ENCODE measurements at regions of chr12 and their contacts with region 1.

Region 1: GRCh38 chr12:53451661-53452158 is at the start of gene PCBP2:
- DNase-seq: peak; percentile 97 to 100 (median 99)
- H3K4me3 ChIP-seq: peak within 1 kb of the TSS; percentile 59 to 94 (median 77)
- H3K27ac ChIP-seq: peak within 1 kb of the TSS; percentile 74 to 99 (median 96)
- H3K27me3 ChIP-seq: no peaks in the 10 kb centered on the region
- CTCF ChIP-seq: peak; percentile 80 to 98 (median 94)
- total RNA-seq, gene PCBP2: 394 to 594 (median 494) TPM

Region 2: DNA sequence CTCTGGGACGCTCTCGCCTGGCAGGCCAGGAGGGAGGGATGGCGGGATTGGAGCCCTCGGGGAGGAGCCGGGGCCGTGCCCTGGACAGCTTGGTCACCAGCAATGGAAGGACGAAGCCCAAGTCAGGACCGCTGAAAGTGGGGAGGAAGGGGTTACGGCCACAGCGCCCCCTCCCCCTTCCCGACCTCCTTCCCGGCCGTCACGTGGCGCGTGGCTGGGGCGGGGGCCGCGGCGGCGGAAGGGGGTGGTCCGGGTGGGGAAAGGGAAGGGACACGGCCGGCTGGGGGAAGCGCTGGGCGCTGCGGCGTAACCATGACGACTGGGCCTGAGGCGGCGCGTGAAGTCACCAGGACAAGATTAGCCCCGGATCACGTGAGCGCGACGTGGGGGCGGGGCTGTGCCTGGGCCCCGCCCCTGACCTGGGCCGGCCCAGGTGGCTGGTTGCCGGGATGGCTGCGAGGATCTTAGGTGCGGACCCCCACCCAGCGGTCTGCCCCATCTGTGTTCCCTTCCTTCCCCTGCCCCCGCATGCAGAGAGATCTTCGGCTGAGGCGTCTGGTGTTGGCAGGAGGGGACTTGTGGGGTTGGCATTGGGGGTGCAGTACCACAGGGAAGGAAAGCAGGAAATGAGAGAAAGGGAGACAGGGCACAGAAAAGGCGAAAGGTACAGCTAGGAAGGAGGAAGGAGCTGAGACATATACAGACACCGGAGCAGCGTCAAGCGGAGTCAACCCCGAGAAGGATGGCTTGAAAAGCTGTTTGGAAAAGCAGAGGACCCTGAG is 41.3 kb after region 1 on chr12:
- intact Hi-C with region 1: loop called in 1 of 2 experiments (anchors 2 kb)
- DNase-seq: peak; percentile 93 to 98 (median 96)
- H3K4me3 ChIP-seq: peak overlapping the region; percentile 51 to 80 (median 67)
- H3K27ac ChIP-seq: peak overlapping the region; percentile 48 to 96 (median 90)
- H3K27me3 ChIP-seq: no peaks in the 10 kb centered on the region
- CTCF ChIP-seq: peak in 27 of 56 donors; percentile 11 to 50 (median 32)

Measured in dorsolateral prefrontal cortex (tissue), 120 donors.